ENCODE measurements at regions of chrX and their contacts with region 1.

Region 1: GRCh38 chrX:129781134-129781672 is 1.5 kb downstream of the SASH3 start:
- DNase-seq: peak; percentile 58 to 94 (median 79)
- ATAC-seq: peak; percentile 78
- H3K4me3 ChIP-seq: peak overlapping the region; percentile 67 to 97
- H3K4me3 Mint-ChIP-seq: peak overlapping the region; percentile 94
- H3K27ac ChIP-seq: peak overlapping the region; percentile 68 to 91
- H3K27ac Mint-ChIP-seq: peak overlapping the region; percentile 96
- H3K4me1 ChIP-seq: peaks cover 68% of the 10 kb centered on the region
- H3K4me1 Mint-ChIP-seq: peaks cover 64% of the 10 kb centered on the region
- H3K27me3 ChIP-seq: no peaks in the 10 kb centered on the region
- H3K27me3 Mint-ChIP-seq: no peaks in the 10 kb centered on the region
- CTCF ChIP-seq: no peak

Region 2: GRCh38 chrX:129364585-129364984 is 416.6 kb before region 1 on chrX:
- CTCF ChIA-PET with region 1: no interaction called
- POLR2A ChIA-PET with region 1: no interaction called
- intact Hi-C with region 1: no loop called
- DNase-seq: no peak
- ATAC-seq: no peak
- H3K4me3 ChIP-seq: no peak overlapping the region
- H3K4me3 Mint-ChIP-seq: no peak overlapping the region
- H3K27ac ChIP-seq: no peak overlapping the region
- H3K27ac Mint-ChIP-seq: no peak overlapping the region
- H3K4me1 ChIP-seq: no peaks in the 10 kb centered on the region
- H3K4me1 Mint-ChIP-seq: no peaks in the 10 kb centered on the region
- H3K27me3 ChIP-seq: no peaks in the 10 kb centered on the region
- H3K27me3 Mint-ChIP-seq: no peaks in the 10 kb centered on the region
- CTCF ChIP-seq: no peak

Region 3: DNA sequence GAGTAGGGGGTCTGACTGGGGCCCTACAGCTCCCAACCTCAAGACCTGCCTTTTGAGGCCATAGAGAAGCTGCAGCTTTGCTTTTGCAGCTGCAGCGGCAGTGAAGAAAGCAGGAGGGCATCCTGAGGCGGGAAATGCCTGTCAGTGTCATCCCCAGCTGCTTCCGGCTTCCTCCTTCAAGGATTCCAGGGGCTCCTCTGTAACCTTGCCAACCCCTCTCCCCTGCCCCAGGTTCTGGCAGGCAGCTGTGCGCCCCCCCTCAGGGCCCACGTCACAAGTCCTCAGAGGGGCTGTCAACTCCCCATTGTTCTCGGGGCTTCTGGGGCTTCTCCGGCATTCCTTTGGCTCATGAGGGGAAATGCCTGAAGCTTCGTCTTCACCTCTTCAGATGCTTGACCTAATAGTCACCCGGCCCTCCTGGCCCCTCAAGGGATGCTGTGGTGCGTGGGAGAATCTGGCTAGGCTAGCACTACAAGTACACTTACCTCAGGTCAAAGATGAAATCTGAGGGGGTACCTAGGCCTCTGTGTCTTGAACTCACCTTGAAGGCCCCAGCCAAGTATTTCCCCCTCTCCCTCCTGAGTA is 158.4 kb before region 1 on chrX:
- CTCF ChIA-PET with region 1: no interaction called
- POLR2A ChIA-PET with region 1: no interaction called
- intact Hi-C with region 1: no loop called
- DNase-seq: no peak
- ATAC-seq: no peak
- H3K4me3 ChIP-seq: no peak overlapping the region
- H3K4me3 Mint-ChIP-seq: no peak overlapping the region
- H3K27ac ChIP-seq: no peak overlapping the region
- H3K27ac Mint-ChIP-seq: no peak overlapping the region
- H3K4me1 ChIP-seq: no peaks in the 10 kb centered on the region
- H3K4me1 Mint-ChIP-seq: no peaks in the 10 kb centered on the region
- H3K27me3 ChIP-seq: no peaks in the 10 kb centered on the region
- H3K27me3 Mint-ChIP-seq: peaks cover 6% of the 10 kb centered on the region
- CTCF ChIP-seq: no peak

Region 4: GRCh38 chrX:129678614-129679195 is 102.5 kb before region 1 on chrX:
- CTCF ChIA-PET with region 1: interaction called, 5 read pairs
- POLR2A ChIA-PET with region 1: interaction called, 16 read pairs
- intact Hi-C with region 1: loop called in 1 of 2 experiments (anchors 2 kb)
- DNase-seq: peak in 8 of 9 experiments; percentile 2 to 67 (median 50)
- ATAC-seq: peak; percentile 72
- H3K4me3 ChIP-seq: peak overlapping the region; percentile 49 to 58
- H3K4me3 Mint-ChIP-seq: peak overlapping the region; percentile 73
- H3K27ac ChIP-seq: peak overlapping the region in 1 of 2 experiments; percentile 35
- H3K27ac Mint-ChIP-seq: peak overlapping the region; percentile 82
- H3K4me1 ChIP-seq: peaks cover 18% of the 10 kb centered on the region
- H3K4me1 Mint-ChIP-seq: peaks cover 18% of the 10 kb centered on the region
- H3K27me3 ChIP-seq: no peaks in the 10 kb centered on the region
- H3K27me3 Mint-ChIP-seq: no peaks in the 10 kb centered on the region
- CTCF ChIP-seq: no peak

Region 5: DNA sequence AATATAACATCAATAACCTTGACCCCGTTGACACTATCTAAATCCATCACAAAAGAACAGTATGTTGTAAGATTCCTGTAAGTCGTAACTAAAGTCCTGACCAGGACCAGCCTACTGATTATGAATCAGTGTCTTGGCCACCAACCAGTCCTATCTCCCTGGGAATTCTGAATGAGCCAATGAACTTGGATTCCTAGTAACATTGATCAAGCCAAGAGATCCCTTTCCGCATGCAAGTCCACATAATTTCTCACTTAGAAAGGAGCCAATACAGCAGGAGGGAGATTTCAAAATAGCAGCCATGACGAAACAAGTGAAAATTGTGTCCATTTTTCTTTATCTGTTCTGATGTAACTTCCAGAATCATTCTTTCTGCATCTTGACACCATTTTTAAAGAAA is 32.9 kb before region 1 on chrX:
- CTCF ChIA-PET with region 1: interaction called, 5 read pairs
- POLR2A ChIA-PET with region 1: interaction called, 3 read pairs
- intact Hi-C with region 1: loop called in 1 of 2 experiments (anchors 5 kb)
- DNase-seq: no peak
- ATAC-seq: no peak
- H3K4me3 ChIP-seq: no peak overlapping the region
- H3K4me3 Mint-ChIP-seq: no peak overlapping the region
- H3K27ac ChIP-seq: no peak overlapping the region
- H3K27ac Mint-ChIP-seq: no peak overlapping the region
- H3K4me1 ChIP-seq: peaks cover 25% of the 10 kb centered on the region
- H3K4me1 Mint-ChIP-seq: peaks cover 25% of the 10 kb centered on the region
- H3K27me3 ChIP-seq: no peaks in the 10 kb centered on the region
- H3K27me3 Mint-ChIP-seq: no peaks in the 10 kb centered on the region
- CTCF ChIP-seq: no peak

Region 6: GRCh38 chrX:129754056-129755024 is 26.9 kb before region 1 on chrX:
- CTCF ChIA-PET with region 1: interaction called, 17 read pairs
- POLR2A ChIA-PET with region 1: interaction called, 40 read pairs
- intact Hi-C with region 1: loop called in 1 of 2 experiments (anchors 1 kb)
- DNase-seq: peak in 1 of 9 experiments; percentile 22
- ATAC-seq: no peak
- H3K4me3 ChIP-seq: no peak overlapping the region
- H3K4me3 Mint-ChIP-seq: no peak overlapping the region
- H3K27ac ChIP-seq: no peak overlapping the region
- H3K27ac Mint-ChIP-seq: peak overlapping the region; percentile 69
- H3K4me1 ChIP-seq: peaks cover 47% of the 10 kb centered on the region
- H3K4me1 Mint-ChIP-seq: peaks cover 50% of the 10 kb centered on the region
- H3K27me3 ChIP-seq: no peaks in the 10 kb centered on the region
- H3K27me3 Mint-ChIP-seq: no peaks in the 10 kb centered on the region
- CTCF ChIP-seq: no peak

Region 7: GRCh38 chrX:129759576-129760061 is 21.6 kb before region 1 on chrX:
- CTCF ChIA-PET with region 1: interaction called, 17 read pairs
- POLR2A ChIA-PET with region 1: interaction called, 40 read pairs
- intact Hi-C with region 1: loop called (anchors 1 to 2 kb)
- DNase-seq: peak in 6 of 9 experiments; percentile 55 to 84 (median 66)
- ATAC-seq: peak; percentile 79
- H3K4me3 ChIP-seq: no peak overlapping the region
- H3K4me3 Mint-ChIP-seq: peak overlapping the region; percentile 29
- H3K27ac ChIP-seq: peak overlapping the region in 1 of 2 experiments; percentile 56
- H3K27ac Mint-ChIP-seq: peak overlapping the region; percentile 81
- H3K4me1 ChIP-seq: peaks cover 60% of the 10 kb centered on the region
- H3K4me1 Mint-ChIP-seq: peaks cover 64% of the 10 kb centered on the region
- H3K27me3 ChIP-seq: no peaks in the 10 kb centered on the region
- H3K27me3 Mint-ChIP-seq: no peaks in the 10 kb centered on the region
- CTCF ChIP-seq: no peak

Region 8: GRCh38 chrX:129843459-129844306 is 62.5 kb after region 1 on chrX and contains the start of gene ZDHHC9:
- CTCF ChIA-PET with region 1: no interaction called
- POLR2A ChIA-PET with region 1: no interaction called
- intact Hi-C with region 1: loop called in 1 of 2 experiments (anchors 10 kb)
- DNase-seq: peak; percentile 70 to 91 (median 81)
- ATAC-seq: peak; percentile 96
- H3K4me3 ChIP-seq: peak within 1 kb of the TSS; percentile 67 to 73
- H3K4me3 Mint-ChIP-seq: peak within 1 kb of the TSS; percentile 86
- H3K27ac ChIP-seq: peak within 1 kb of the TSS; percentile 36 to 60
- H3K27ac Mint-ChIP-seq: peak within 1 kb of the TSS; percentile 64
- H3K4me1 ChIP-seq: peaks cover 24% of the 10 kb centered on the region
- H3K4me1 Mint-ChIP-seq: peaks cover 32% of the 10 kb centered on the region
- H3K27me3 ChIP-seq: no peaks in the 10 kb centered on the region
- H3K27me3 Mint-ChIP-seq: no peaks in the 10 kb centered on the region
- CTCF ChIP-seq: no peak
- total RNA-seq, gene ZDHHC9: 2.4 to 2.6 TPM

Region 9: GRCh38 chrX:129932016-129932820 is 151.0 kb after region 1 on chrX:
- CTCF ChIA-PET with region 1: no interaction called
- POLR2A ChIA-PET with region 1: no interaction called
- intact Hi-C with region 1: no loop called
- DNase-seq: peak; percentile 47 to 89 (median 76)
- ATAC-seq: peak; percentile 72
- H3K4me3 ChIP-seq: peak overlapping the region; percentile 58 to 70
- H3K4me3 Mint-ChIP-seq: peak overlapping the region; percentile 70
- H3K27ac ChIP-seq: peak overlapping the region in 1 of 2 experiments; percentile 77
- H3K27ac Mint-ChIP-seq: peak overlapping the region; percentile 57
- H3K4me1 ChIP-seq: no peaks in the 10 kb centered on the region
- H3K4me1 Mint-ChIP-seq: peaks cover 8% of the 10 kb centered on the region
- H3K27me3 ChIP-seq: no peaks in the 10 kb centered on the region
- H3K27me3 Mint-ChIP-seq: no peaks in the 10 kb centered on the region
- CTCF ChIP-seq: no peak

Region 10: DNA sequence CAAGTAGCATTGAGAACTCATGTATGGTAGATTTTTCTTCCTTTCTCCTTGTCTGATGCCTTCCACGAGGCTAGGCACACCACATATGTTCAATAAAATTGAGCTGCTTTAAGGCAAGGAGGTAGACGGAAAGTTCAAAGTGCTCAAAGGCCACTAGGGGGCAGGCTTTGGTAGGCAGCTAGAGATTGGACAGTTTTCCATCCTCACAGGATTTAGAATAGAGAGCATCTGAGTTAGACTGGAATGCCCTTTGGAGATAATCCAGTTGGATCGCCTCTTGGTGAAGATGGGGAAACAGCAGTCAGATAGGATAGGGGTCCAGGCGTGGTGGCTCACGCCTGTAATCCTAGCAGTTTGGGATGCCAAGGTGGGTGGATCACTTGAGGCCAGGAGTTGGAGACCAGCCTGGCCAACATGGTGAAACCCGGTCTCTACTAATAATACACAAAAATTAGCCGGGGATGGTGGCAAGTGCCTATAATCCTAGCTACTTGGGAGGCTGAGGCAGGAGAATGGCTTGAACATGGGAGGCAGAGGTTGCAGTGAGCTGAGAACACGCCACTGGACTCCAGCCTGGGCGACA is 298.7 kb after region 1 on chrX:
- CTCF ChIA-PET with region 1: no interaction called
- POLR2A ChIA-PET with region 1: no interaction called
- intact Hi-C with region 1: no loop called
- DNase-seq: peak in 8 of 9 experiments; percentile 18 to 78 (median 64)
- ATAC-seq: no peak
- H3K4me3 ChIP-seq: no peak overlapping the region
- H3K4me3 Mint-ChIP-seq: peak overlapping the region; percentile 19
- H3K27ac ChIP-seq: peak overlapping the region in 1 of 2 experiments; percentile 82
- H3K27ac Mint-ChIP-seq: peak overlapping the region; percentile 62
- H3K4me1 ChIP-seq: peaks cover 42% of the 10 kb centered on the region
- H3K4me1 Mint-ChIP-seq: peaks cover 43% of the 10 kb centered on the region
- H3K27me3 ChIP-seq: no peaks in the 10 kb centered on the region
- H3K27me3 Mint-ChIP-seq: no peaks in the 10 kb centered on the region
- CTCF ChIP-seq: peak; percentile 63

Measured in CD8-positive, alpha-beta T cell (primary cell).